Activated CD4-positive, alpha-beta T cell treated with anti-CD3 and anti-CD28 coated beads, Interleukin-2, amount 10 ng/mL, durations not matched to agents 24 days and 14 days (primary cell): ENCODE measurements at regions of chr6 and their contacts with region 1.

Region 1: GRCh38 chr6:85354761-85355618 is 94.9 kb upstream of the NT5E start:
- DNase-seq: peak; percentile 90
- H3K4me3 Mint-ChIP-seq: no peak overlapping the region
- H3K27ac Mint-ChIP-seq: no peak overlapping the region
- H3K4me1 Mint-ChIP-seq: no peaks in the 10 kb centered on the region
- H3K27me3 Mint-ChIP-seq: peaks cover 6% of the 10 kb centered on the region

Region 2: DNA sequence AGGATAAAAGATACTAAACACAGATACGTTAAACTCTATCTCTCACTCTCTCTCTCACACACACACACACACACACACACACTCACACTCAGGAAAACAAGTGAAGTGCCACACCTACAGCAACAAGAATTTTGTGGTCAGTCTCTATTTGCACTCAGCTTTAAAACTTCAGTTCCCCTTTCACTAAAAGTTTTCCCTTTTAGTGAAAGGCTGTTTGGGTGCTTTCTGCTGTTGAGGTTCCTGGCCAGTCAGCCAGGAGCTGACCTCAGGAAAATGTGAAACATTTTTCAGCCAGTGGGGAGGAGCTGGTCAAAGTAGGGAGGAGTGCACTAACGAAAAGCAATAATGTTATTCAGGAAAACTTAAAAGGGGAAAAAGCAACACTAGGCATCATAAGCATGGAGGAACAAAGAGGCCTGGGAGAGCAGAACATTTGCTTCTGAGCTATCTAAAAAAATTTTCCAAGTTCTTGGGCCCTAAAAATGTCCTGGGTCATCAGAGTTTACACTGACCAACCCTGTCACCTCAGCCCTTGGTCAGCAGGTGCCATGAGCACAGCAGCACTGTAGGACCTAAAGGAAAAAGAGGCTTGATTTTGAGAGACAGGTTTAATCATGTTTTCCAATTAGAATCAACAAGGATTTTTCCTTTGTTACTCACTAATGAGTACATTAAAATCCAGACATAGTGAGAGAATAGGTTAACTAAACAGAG is 64.2 kb after region 1 on chr6:
- intact Hi-C with region 1: no loop called
- DNase-seq: peak; percentile 56
- H3K4me3 Mint-ChIP-seq: peak overlapping the region; percentile 41
- H3K27ac Mint-ChIP-seq: peak overlapping the region; percentile 64
- H3K4me1 Mint-ChIP-seq: peaks cover 33% of the 10 kb centered on the region
- H3K27me3 Mint-ChIP-seq: peaks cover 8% of the 10 kb centered on the region

Region 3: GRCh38 chr6:85482905-85483700 is 128.1 kb after region 1 on chr6:
- intact Hi-C with region 1: loop called (anchors 1 kb)
- DNase-seq: peak; percentile 96
- H3K4me3 Mint-ChIP-seq: peak overlapping the region; percentile 4
- H3K27ac Mint-ChIP-seq: peak overlapping the region; percentile 9
- H3K4me1 Mint-ChIP-seq: peaks cover 17% of the 10 kb centered on the region
- H3K27me3 Mint-ChIP-seq: no peaks in the 10 kb centered on the region

Region 4: GRCh38 chr6:85537055-85537494 is 182.1 kb after region 1 on chr6:
- intact Hi-C with region 1: loop called (anchors 1 kb)
- DNase-seq: no peak
- H3K4me3 Mint-ChIP-seq: no peak overlapping the region
- H3K27ac Mint-ChIP-seq: no peak overlapping the region
- H3K4me1 Mint-ChIP-seq: no peaks in the 10 kb centered on the region
- H3K27me3 Mint-ChIP-seq: no peaks in the 10 kb centered on the region

Region 5: DNA sequence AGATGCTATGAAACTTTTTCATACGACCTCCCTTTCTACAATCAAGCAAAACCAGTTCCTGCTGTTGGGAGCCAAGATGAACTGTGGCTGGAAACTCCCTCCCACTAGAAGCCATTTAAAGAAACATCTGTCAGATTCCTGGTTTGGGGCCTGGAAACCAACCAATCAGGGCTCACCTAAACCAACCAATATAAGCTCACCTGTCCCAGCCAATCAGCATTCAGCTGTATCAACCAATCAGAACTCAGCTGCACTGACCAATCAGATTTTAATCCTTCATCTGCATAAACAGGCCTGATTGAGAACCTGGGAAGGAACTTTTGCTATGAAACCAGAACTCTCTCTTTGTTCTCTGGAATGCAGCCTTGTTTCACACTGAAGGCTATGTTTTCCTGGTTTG is 196.3 kb after region 1 on chr6:
- intact Hi-C with region 1: no loop called
- DNase-seq: no peak
- H3K4me3 Mint-ChIP-seq: no peak overlapping the region
- H3K27ac Mint-ChIP-seq: no peak overlapping the region
- H3K4me1 Mint-ChIP-seq: no peaks in the 10 kb centered on the region
- H3K27me3 Mint-ChIP-seq: no peaks in the 10 kb centered on the region

Region 6: DNA sequence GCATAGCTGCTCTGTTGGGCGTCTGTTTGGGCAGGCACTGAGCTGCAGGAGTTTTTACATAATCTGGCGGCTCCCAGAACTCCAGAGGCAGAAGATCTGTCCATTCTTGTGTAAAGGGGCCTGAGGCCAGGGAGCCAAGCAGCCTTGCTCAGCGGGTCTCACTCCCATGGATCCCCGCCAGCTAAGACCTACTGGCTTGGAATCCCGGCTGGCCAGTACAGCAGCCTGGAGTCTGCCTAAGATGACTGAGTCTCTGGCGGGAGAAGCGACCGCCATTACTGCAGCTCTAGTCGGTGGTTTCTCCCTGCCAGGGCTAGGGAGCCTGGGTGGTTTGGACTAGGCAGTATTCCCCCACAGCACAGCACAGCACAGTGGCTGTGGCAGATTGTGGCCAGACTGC is 556.1 kb after region 1 on chr6:
- intact Hi-C with region 1: no loop called
- DNase-seq: no peak
- H3K4me3 Mint-ChIP-seq: no peak overlapping the region
- H3K27ac Mint-ChIP-seq: no peak overlapping the region
- H3K4me1 Mint-ChIP-seq: no peaks in the 10 kb centered on the region
- H3K27me3 Mint-ChIP-seq: no peaks in the 10 kb centered on the region